Left ventricle myocardium superior (tissue), 1 donor: ENCODE measurements at regions of chr2 and their contacts with region 1.

Region 1: GRCh38 chr2:189115126-189115525 is 64.4 kb downstream of the COL5A2 start:
- DNase-seq: no peak
- ATAC-seq: no peak

Region 2: DNA sequence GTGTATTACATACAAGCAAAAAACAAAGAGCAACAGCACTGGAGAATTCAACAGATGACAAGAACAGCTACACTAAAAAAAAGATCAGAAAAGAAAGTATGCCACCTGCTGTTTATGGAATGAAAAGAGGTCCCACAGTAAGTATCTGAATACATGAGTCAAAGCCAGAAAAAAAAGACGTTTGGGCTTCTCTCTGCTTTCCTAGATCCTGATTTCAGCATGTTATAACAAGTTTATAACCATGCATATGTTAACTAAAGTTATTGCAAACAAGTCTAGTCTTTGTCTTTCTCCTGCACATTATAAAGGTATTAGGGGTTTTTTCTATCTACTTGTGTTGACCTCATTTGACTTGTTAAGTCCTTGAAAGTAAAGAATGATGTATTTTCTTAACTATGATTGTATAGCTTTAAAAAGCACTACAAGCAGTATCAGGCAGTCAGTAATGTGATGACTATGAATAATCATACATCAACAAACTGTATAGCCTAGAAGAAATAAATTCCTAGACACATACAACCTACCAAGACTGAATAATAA is 172.9 kb after region 1 on chr2:
- intact Hi-C with region 1: loop called (anchors 10 kb)
- DNase-seq: no peak
- ATAC-seq: peak; percentile 62